CD4-positive, alpha-beta memory T cell (primary cell): ENCODE measurements at regions of chr17 and their contacts with region 1.

Region 1: GRCh38 chr17:45277216-45277849 is 15.4 kb upstream of the SPATA32 start:
- DNase-seq: peak; percentile 83 to 91 (median 85)
- H3K4me3 ChIP-seq: no peak overlapping the region
- H3K4me3 Mint-ChIP-seq: no peak overlapping the region
- H3K27ac ChIP-seq: no peak overlapping the region
- H3K27ac Mint-ChIP-seq: peak overlapping the region in 6 of 7 donors; percentile 15 to 86 (median 48)
- H3K4me1 ChIP-seq: peaks cover 6% of the 10 kb centered on the region
- H3K4me1 Mint-ChIP-seq: peaks cover 8 to 11% (median 10%) of the 10 kb centered on the region in 4 donors
- H3K27me3 ChIP-seq: no peaks in the 10 kb centered on the region
- H3K27me3 Mint-ChIP-seq: no peaks in the 10 kb centered on the region

Region 2: GRCh38 chr17:45261577-45262515 is 15.5 kb before region 1 on chr17 and contains the start of gene SPATA32:
- CTCF ChIA-PET with region 1: interaction called, 29 read pairs
- POLR2A ChIA-PET with region 1: interaction called, 3 read pairs
- intact Hi-C with region 1: no loop called
- DNase-seq: peak; percentile 61 to 76 (median 66)
- H3K4me3 ChIP-seq: peak within 1 kb of the TSS in 1 of 2 donors; percentile 48
- H3K4me3 Mint-ChIP-seq: peak within 1 kb of the TSS; percentile 76 to 88 (median 82)
- H3K27ac ChIP-seq: peak within 1 kb of the TSS; percentile 55
- H3K27ac Mint-ChIP-seq: peak within 1 kb of the TSS; percentile 71 to 91 (median 84)
- H3K4me1 ChIP-seq: peaks cover 26% of the 10 kb centered on the region
- H3K4me1 Mint-ChIP-seq: peaks cover 14 to 42% (median 26%) of the 10 kb centered on the region in 4 donors
- H3K27me3 ChIP-seq: no peaks in the 10 kb centered on the region
- H3K27me3 Mint-ChIP-seq: no peaks in the 10 kb centered on the region
- total RNA-seq, gene SPATA32: 0.22 to 0.41 TPM

Region 3: GRCh38 chr17:45341533-45342158 is 64.3 kb after region 1 on chr17:
- CTCF ChIA-PET with region 1: no interaction called
- POLR2A ChIA-PET with region 1: no interaction called
- intact Hi-C with region 1: no loop called
- DNase-seq: no peak
- H3K4me3 ChIP-seq: no peak overlapping the region
- H3K4me3 Mint-ChIP-seq: no peak overlapping the region
- H3K27ac ChIP-seq: no peak overlapping the region
- H3K27ac Mint-ChIP-seq: peak overlapping the region in 2 of 7 donors; percentile 56 to 77
- H3K4me1 ChIP-seq: no peaks in the 10 kb centered on the region
- H3K4me1 Mint-ChIP-seq: no peaks in the 10 kb centered on the region
- H3K27me3 ChIP-seq: no peaks in the 10 kb centered on the region
- H3K27me3 Mint-ChIP-seq: peaks cover 0 to 3% of the 10 kb centered on the region in 2 donors

Region 4: DNA sequence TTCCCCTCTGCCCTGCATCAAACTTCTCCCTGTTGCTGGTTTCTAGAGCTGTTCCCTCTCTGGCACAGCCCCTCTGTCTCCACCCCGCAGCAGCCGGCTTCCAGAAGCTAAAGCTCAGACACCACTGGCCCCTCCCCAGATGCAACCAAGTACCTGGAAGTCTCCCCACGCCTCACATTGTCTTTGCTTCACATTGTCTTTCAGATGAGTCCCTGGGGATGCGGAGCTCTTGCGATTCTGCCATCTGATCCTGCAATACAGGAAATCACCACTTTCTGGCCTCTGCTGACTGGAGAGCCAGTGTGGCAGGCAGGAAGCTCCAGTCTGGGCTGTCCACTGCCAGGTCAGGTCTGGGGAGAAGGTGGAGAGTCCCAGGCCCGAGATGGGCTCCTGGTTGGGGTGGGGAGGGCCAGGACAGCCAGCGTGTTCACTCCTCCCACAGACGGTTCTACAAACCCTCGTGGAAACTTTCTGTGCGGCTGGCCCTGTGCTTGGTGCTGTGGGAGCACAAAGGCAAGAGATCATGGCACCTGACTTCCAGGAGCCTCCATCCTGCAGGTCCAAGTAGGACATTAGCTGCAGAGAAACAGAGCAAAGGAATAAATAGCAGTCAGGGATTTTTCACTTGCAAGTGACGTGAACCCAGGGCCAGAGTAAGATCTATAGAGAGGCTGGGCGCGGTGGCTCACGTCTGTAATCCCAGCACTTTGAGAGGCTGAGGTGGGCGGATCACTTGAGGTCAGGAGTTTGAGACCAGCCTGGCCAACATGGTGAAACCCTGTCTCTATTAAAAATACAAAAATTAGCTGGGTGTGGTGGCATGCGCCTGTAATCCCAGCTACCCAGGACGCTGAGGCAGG is 87.4 kb after region 1 on chr17:
- CTCF ChIA-PET with region 1: interaction called, 14 read pairs
- POLR2A ChIA-PET with region 1: no interaction called
- intact Hi-C with region 1: no loop called
- DNase-seq: no peak
- H3K4me3 ChIP-seq: no peak overlapping the region
- H3K4me3 Mint-ChIP-seq: no peak overlapping the region
- H3K27ac ChIP-seq: no peak overlapping the region
- H3K27ac Mint-ChIP-seq: peak overlapping the region in 1 of 7 donors; percentile 53
- H3K4me1 ChIP-seq: no peaks in the 10 kb centered on the region
- H3K4me1 Mint-ChIP-seq: peaks cover 0 to 2% (median 0%) of the 10 kb centered on the region in 4 donors
- H3K27me3 ChIP-seq: no peaks in the 10 kb centered on the region
- H3K27me3 Mint-ChIP-seq: peaks cover 12 to 14% of the 10 kb centered on the region in 2 donors

Region 5: GRCh38 chr17:45385331-45385997 is 108.1 kb after region 1 on chr17:
- CTCF ChIA-PET with region 1: interaction called, 215 read pairs
- POLR2A ChIA-PET with region 1: interaction called, 25 read pairs
- intact Hi-C with region 1: loop called (anchors 1 kb)
- DNase-seq: peak; percentile 80 to 86 (median 82)
- H3K4me3 ChIP-seq: no peak overlapping the region
- H3K4me3 Mint-ChIP-seq: peak overlapping the region in 1 of 8 donors; percentile 11
- H3K27ac ChIP-seq: no peak overlapping the region
- H3K27ac Mint-ChIP-seq: peak overlapping the region in 3 of 7 donors; percentile 32 to 68 (median 50)
- H3K4me1 ChIP-seq: peaks cover 4% of the 10 kb centered on the region
- H3K4me1 Mint-ChIP-seq: peaks cover 0 to 6% (median 4%) of the 10 kb centered on the region in 4 donors
- H3K27me3 ChIP-seq: no peaks in the 10 kb centered on the region
- H3K27me3 Mint-ChIP-seq: peaks cover 5 to 9% of the 10 kb centered on the region in 2 donors